G401 (cell line): ENCODE measurements at regions of chr11 and their contacts with region 1.

Region 1: DNA sequence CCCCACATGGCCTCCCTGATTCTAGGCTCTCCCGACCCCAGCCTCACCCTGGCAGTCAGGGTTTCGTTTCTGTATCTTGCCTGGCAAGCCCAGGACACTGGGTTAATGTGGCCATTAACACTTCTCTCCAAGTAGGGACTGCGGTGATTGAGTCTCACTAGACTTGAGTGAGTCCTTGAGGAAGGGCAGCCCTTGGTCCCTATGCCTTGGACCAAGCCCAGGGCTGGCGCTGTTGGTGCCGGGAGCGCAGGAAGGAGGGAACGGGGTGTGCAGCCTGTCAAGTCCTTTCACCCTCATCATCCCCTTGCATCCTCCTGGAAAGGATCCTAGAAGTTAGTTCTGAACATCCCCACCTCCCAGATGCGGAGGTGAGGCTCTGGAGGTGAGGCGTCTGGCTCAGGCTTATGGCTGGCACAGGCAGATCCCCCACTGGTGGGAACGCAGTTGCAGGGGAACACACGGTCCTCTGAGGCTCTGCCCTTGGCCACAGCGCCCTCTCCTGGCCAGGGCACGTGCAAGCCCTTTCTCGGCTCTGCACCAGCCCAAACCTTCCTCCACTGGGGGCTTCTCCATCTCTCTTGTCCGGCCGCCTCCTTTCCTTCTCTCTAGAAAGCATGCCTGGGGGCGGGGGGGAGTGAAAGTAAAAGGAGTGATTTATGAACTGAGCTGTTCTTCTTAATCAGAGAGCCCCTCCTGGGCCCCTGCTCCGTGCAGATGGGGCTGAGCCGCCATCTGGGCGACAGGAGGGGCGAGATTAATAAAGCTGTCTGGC is 56.7 kb downstream of the TP53I11 start:
- DNase-seq: peak; percentile 79

Region 2: DNA sequence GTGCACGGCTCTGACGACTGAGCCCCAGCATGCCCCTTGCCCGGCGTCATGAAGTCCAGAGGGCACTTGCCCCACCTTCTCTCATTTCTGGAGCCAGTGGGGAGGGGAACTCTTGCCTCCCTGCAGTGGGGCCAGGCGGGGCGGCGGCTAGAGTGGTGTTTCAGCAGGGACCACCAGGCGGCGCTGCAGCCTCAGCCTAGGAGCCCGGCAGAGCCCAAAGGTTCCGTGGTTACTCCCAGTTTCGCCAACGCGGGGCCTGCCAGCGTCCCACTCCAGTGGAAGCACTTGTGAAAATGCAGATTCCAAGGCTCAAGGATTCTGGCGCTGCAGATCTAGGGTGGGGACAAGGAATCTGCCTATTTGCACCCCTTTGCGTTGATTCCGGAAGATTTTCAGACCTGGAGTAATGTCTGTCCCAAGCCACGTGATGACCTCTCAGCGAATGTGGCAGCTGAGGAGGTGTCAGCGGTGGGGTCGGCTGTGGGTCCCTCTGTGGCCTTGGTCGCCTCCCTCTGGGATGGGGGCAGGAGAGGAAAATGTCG is 272.8 kb before region 1 on chr11:
- in situ Hi-C with region 1: loop called (anchors 10 kb)
- DNase-seq: peak; percentile 84

Region 3: GRCh38 chr11:44727373-44728287 is 166.4 kb before region 1 on chr11:
- in situ Hi-C with region 1: loop called (anchors 5 kb)
- DNase-seq: peak; percentile 85

Region 4: DNA sequence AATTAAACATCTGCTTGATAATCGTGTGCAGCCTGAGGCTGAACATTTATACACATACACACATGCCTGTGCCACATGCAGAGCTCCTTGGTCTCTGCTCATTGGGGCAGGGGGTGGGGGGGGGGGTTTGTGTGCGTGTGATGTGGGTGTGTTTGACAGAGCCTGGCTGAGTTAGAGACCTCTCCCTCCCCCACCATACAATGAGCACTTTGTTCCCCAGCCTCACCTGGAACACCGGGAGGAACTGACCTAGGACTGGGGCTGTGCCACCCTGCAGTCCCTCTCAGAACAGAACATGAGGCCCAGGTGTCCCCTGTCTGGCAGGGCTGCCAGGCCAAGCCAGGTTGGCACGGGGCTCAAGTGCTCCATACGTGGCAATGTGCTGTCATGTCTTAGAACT is 39.9 kb before region 1 on chr11:
- in situ Hi-C with region 1: loop called (anchors 5 kb)
- DNase-seq: no peak